Naive thymus-derived CD4-positive, alpha-beta T cell (primary cell): ENCODE measurements at regions of chr11 and their contacts with region 1.

Region 1: GRCh38 chr11:76626921-76627401 is 43.6 kb downstream of the LRRC32 start:
- DNase-seq: peak in 2 of 9 donors; percentile 24 to 76
- ATAC-seq: peak; percentile 60
- H3K4me3 ChIP-seq: no peak overlapping the region
- H3K4me3 Mint-ChIP-seq: peak overlapping the region in 1 of 10 donors; percentile 60
- H3K27ac ChIP-seq: no peak overlapping the region
- H3K27ac Mint-ChIP-seq: peak overlapping the region in 2 of 9 donors; percentile 7 to 79
- H3K4me1 ChIP-seq: peaks cover 0 to 7% of the 10 kb centered on the region in 2 donors
- H3K4me1 Mint-ChIP-seq: peaks cover 5 to 46% (median 12%) of the 10 kb centered on the region in 7 donors
- H3K27me3 ChIP-seq: no peaks in the 10 kb centered on the region
- H3K27me3 Mint-ChIP-seq: peaks cover 0 to 14% (median 6%) of the 10 kb centered on the region in 5 donors

Region 2: DNA sequence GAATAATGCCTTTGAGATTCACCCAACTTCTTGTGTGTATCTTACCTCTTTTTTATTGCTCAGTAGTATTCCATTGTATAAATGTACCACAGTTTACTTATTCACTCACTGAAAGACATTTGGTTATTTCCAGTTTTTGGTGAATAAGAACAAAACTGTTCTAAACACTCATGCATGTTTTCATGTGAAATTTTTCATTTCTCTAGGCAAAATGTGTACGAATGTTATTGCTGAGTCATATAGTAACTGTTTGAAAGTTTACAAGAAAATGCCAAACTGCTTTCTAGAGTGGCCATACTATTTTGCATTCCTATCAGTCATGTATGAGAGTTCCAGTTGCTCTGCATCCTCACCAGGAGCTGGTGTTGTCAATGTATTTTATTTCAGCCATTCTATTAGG is 190.9 kb before region 1 on chr11:
- CTCF ChIA-PET with region 1: no interaction called
- POLR2A ChIA-PET with region 1: no interaction called
- intact Hi-C with region 1: no loop called
- DNase-seq: no peak
- ATAC-seq: no peak
- H3K4me3 ChIP-seq: no peak overlapping the region
- H3K4me3 Mint-ChIP-seq: no peak overlapping the region
- H3K27ac ChIP-seq: no peak overlapping the region
- H3K27ac Mint-ChIP-seq: no peak overlapping the region
- H3K4me1 ChIP-seq: no peaks in the 10 kb centered on the region
- H3K4me1 Mint-ChIP-seq: peaks cover 0 to 4% (median 2%) of the 10 kb centered on the region in 7 donors
- H3K27me3 ChIP-seq: no peaks in the 10 kb centered on the region
- H3K27me3 Mint-ChIP-seq: peaks cover 0 to 7% (median 0%) of the 10 kb centered on the region in 5 donors

Region 3: GRCh38 chr11:76588455-76589325 is 38.3 kb before region 1 on chr11:
- CTCF ChIA-PET with region 1: no interaction called
- POLR2A ChIA-PET with region 1: no interaction called
- intact Hi-C with region 1: loop called in 1 of 2 experiments (anchors 2 kb)
- DNase-seq: peak in 1 of 9 donors; percentile 48
- ATAC-seq: peak; percentile 83
- H3K4me3 ChIP-seq: no peak overlapping the region
- H3K4me3 Mint-ChIP-seq: peak overlapping the region in 1 of 10 donors; percentile 21
- H3K27ac ChIP-seq: no peak overlapping the region
- H3K27ac Mint-ChIP-seq: peak overlapping the region in 1 of 9 donors; percentile 92
- H3K4me1 ChIP-seq: no peaks in the 10 kb centered on the region
- H3K4me1 Mint-ChIP-seq: peaks cover 0 to 68% (median 0%) of the 10 kb centered on the region in 7 donors
- H3K27me3 ChIP-seq: no peaks in the 10 kb centered on the region
- H3K27me3 Mint-ChIP-seq: peaks cover 0 to 20% (median 0%) of the 10 kb centered on the region in 5 donors